Stomach (tissue), 19 donors: ENCODE measurements at regions of chr7 and their contacts with region 1.

Region 1: GRCh38 chr7:155796381-155797261 is 15.6 kb downstream of the SHH start:
- DNase-seq: peak; percentile 84 to 86
- H3K4me3 ChIP-seq: peak overlapping the region in 1 of 4 donors; percentile 4
- H3K27ac ChIP-seq: no peak overlapping the region
- H3K4me1 ChIP-seq: peaks cover 8 to 11% (median 8%) of the 10 kb centered on the region in 4 donors
- H3K27me3 ChIP-seq: peaks cover 0 to 64% (median 12%) of the 10 kb centered on the region in 3 donors
- CTCF ChIP-seq: peak in 5 of 7 experiments; percentile 48 to 95 (median 91)
- EP300 ChIP-seq: no peak
- POLR2A ChIP-seq: no peak

Region 2: GRCh38 chr7:156156734-156157610 is 360.4 kb after region 1 on chr7:
- intact Hi-C with region 1: loop called (anchors 10 kb)
- DNase-seq: peak; percentile 66 to 72
- H3K4me3 ChIP-seq: no peak overlapping the region
- H3K27ac ChIP-seq: no peak overlapping the region
- H3K4me1 ChIP-seq: no peaks in the 10 kb centered on the region
- H3K27me3 ChIP-seq: no peaks in the 10 kb centered on the region
- CTCF ChIP-seq: peak in 4 of 7 experiments; percentile 32 to 75 (median 40)
- EP300 ChIP-seq: no peak
- POLR2A ChIP-seq: no peak

Region 3: GRCh38 chr7:156475666-156476065 is 679.0 kb after region 1 on chr7:
- intact Hi-C with region 1: loop called (anchors 5 kb)
- DNase-seq: no peak
- H3K4me3 ChIP-seq: no peak overlapping the region
- H3K27ac ChIP-seq: no peak overlapping the region
- H3K4me1 ChIP-seq: no peaks in the 10 kb centered on the region
- H3K27me3 ChIP-seq: no peaks in the 10 kb centered on the region
- CTCF ChIP-seq: no peak
- EP300 ChIP-seq: no peak
- POLR2A ChIP-seq: no peak